Mammary epithelial cell (primary cell): ENCODE measurements at regions of chr6 and their contacts with region 1.

Region 1: DNA sequence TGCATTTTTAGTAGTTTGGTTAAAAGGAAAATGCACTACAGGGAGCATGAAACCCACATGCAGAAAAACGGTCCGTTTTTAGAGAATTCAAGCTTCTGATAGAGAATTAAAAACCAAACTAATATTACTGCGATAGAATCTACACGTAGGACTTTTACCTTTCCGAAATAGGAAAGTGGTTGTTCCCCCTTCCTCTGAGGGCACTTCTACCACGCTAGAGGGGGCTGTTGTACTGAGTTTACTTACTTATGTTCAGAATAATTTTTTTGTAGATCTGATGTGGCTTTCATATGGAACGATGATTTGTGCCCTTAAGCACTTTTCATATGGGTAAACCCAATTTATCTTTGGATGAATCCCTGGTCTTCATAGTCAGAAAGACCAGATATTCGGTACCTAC is 264.3 kb upstream of the PLN start:
- DNase-seq: peak; percentile 56
- H3K4me3 ChIP-seq: no peak overlapping the region
- H3K27ac ChIP-seq: no peak overlapping the region
- H3K4me1 ChIP-seq: no peaks in the 10 kb centered on the region
- H3K27me3 ChIP-seq: no peaks in the 10 kb centered on the region
- CTCF ChIP-seq: peak; percentile 77 to 80

Region 2: GRCh38 chr6:118111708-118112107 is 172.1 kb before region 1 on chr6:
- CTCF ChIA-PET with region 1: no interaction called
- dilution Hi-C with region 1: no loop called
- in situ Hi-C with region 1: no loop called
- intact Hi-C with region 1: no loop called
- DNase-seq: no peak
- H3K4me3 ChIP-seq: no peak overlapping the region
- H3K27ac ChIP-seq: no peak overlapping the region
- H3K4me1 ChIP-seq: no peaks in the 10 kb centered on the region
- H3K27me3 ChIP-seq: no peaks in the 10 kb centered on the region
- CTCF ChIP-seq: no peak

Region 3: DNA sequence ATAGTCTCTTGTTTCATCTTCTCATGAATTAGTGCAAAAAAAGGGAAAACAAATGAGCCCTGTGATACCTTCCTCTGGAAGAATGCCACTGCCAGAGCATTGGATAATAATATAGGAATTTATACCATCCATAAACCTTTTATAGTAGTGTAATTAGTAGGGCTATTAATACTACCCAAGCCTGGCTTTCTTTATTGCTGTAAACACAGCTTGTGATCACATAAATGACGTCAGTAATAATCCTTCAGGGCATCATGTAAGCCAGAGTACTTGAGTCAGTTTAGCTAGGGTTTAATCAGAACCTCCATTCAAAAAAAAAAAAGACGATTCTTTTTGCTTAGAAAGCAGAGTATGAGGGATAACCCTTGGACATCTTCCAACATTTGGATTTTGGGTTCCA is 111.9 kb before region 1 on chr6:
- CTCF ChIA-PET with region 1: no interaction called
- dilution Hi-C with region 1: no loop called
- in situ Hi-C with region 1: no loop called
- intact Hi-C with region 1: no loop called
- DNase-seq: peak; percentile 3
- H3K4me3 ChIP-seq: no peak overlapping the region
- H3K27ac ChIP-seq: no peak overlapping the region
- H3K4me1 ChIP-seq: no peaks in the 10 kb centered on the region
- H3K27me3 ChIP-seq: no peaks in the 10 kb centered on the region
- CTCF ChIP-seq: no peak

Region 4: GRCh38 chr6:118377711-118378414 is 94.1 kb after region 1 on chr6:
- CTCF ChIA-PET with region 1: no interaction called
- dilution Hi-C with region 1: no loop called
- in situ Hi-C with region 1: no loop called
- intact Hi-C with region 1: no loop called
- DNase-seq: no peak
- H3K4me3 ChIP-seq: no peak overlapping the region
- H3K27ac ChIP-seq: no peak overlapping the region
- H3K4me1 ChIP-seq: no peaks in the 10 kb centered on the region
- H3K27me3 ChIP-seq: no peaks in the 10 kb centered on the region
- CTCF ChIP-seq: no peak

Region 5: GRCh38 chr6:118509009-118509617 is 225.3 kb after region 1 on chr6:
- CTCF ChIA-PET with region 1: interaction called, 7 read pairs
- dilution Hi-C with region 1: no loop called
- in situ Hi-C with region 1: loop called (anchors 10 to 25 kb)
- intact Hi-C with region 1: loop called (anchors 1 kb)
- DNase-seq: no peak
- H3K4me3 ChIP-seq: no peak overlapping the region
- H3K27ac ChIP-seq: no peak overlapping the region
- H3K4me1 ChIP-seq: no peaks in the 10 kb centered on the region
- H3K27me3 ChIP-seq: no peaks in the 10 kb centered on the region
- CTCF ChIP-seq: peak; percentile 66 to 71

Region 6: DNA sequence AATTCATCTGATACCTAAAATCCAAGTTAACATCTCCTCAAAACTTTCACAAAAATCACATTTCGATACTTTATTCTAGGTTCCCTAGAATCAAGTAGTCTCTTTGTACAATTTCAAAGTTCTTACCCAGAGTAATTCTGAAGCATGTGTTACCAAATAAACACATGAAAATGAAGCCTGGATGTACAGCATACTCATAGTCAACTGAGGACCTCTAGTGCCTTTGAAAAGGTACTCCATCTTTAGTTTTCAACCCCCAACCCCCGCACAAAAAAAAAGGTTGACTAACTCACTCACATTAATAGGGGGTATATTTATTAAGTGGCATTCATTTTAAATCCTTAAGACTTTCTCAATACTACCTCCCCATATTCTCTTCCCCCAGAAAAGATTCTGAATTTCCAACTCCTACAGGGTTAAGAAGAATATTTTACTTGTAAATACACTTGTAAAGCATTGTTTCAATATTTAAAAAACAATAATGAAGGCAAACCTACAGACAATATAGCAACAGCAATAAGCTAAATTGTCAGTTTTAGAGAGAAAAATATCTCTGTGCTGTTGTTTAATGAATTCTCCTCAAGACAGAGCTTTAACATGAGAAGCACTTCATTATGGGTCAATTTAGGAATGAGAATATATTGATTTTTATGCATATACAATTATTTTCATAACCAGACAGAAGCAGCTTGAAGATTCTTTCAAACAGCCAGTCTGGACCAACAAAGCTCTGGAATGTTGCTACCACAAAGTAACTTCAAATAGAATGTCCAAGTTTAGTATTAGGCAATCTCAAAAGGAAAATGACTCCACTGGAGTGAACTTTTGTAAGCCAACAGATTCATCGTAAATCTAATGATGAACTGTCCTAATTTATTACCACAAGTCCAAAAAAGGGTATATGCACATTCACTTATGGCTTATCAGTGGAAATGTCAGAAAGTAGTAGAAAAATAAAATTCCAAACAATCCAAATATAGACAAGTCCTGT is 267.6 kb after region 1 on chr6:
- CTCF ChIA-PET with region 1: no interaction called
- dilution Hi-C with region 1: no loop called
- in situ Hi-C with region 1: no loop called
- intact Hi-C with region 1: loop called (anchors 1 kb)
- DNase-seq: peak; percentile 37
- H3K4me3 ChIP-seq: peak overlapping the region in 1 of 3 experiments; percentile 11
- H3K27ac ChIP-seq: no peak overlapping the region
- H3K4me1 ChIP-seq: peaks cover 5% of the 10 kb centered on the region
- H3K27me3 ChIP-seq: no peaks in the 10 kb centered on the region
- CTCF ChIP-seq: peak; percentile 58 to 71

Region 7: DNA sequence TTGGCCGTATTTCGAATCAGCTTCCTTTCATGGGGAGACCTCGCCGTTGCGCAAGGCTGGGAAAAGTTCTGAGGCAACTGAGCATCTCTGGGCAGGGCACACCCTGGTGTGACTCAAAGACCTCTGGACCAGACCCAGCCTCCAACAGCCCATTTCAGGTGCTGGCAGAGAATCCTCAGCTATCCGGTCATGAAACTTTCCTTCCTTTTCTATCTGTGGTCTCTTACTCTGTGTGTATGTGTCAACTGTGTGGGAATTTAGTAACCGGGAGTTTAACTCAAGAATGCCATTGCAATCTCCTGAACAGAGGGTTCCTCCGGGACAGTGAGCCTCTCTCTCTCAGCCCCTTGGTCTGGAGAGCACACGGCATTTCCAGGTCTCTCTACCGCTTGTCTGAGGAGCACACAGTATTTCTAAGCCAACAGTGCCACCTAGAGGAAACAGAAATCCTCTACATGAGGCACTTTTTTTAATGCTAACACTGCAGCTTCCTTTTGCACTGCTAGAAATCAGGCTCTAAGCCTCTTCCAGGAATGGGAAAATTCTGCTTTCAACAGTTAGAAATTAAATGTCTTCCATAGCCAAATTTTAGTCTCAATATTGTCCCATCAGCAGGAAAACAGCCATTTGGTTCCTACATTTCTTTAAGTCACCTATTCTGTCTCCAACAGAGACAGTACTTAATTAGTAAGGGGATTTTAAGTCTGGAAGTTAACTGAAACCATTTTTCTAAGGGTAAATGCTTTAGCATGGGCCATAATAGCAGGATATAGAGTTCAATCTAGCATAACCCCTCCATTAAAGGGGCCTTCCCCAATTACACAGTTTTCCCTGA is 297.0 kb after region 1 on chr6:
- CTCF ChIA-PET with region 1: no interaction called
- dilution Hi-C with region 1: no loop called
- in situ Hi-C with region 1: loop called in 1 of 2 experiments (anchors 10 kb)
- intact Hi-C with region 1: loop called (anchors 1 kb)
- DNase-seq: peak; percentile 66
- H3K4me3 ChIP-seq: no peak overlapping the region
- H3K27ac ChIP-seq: no peak overlapping the region
- H3K4me1 ChIP-seq: peaks cover 6% of the 10 kb centered on the region
- H3K27me3 ChIP-seq: no peaks in the 10 kb centered on the region
- CTCF ChIP-seq: peak; percentile 45 to 71

Region 8: GRCh38 chr6:118776607-118777549 is 493.1 kb after region 1 on chr6:
- CTCF ChIA-PET with region 1: no interaction called
- dilution Hi-C with region 1: no loop called
- in situ Hi-C with region 1: no loop called
- intact Hi-C with region 1: loop called (anchors 5 kb)
- DNase-seq: peak; percentile 88
- H3K4me3 ChIP-seq: peak overlapping the region in 2 of 3 experiments; percentile 10 to 23
- H3K27ac ChIP-seq: no peak overlapping the region
- H3K4me1 ChIP-seq: peaks cover 27% of the 10 kb centered on the region
- H3K27me3 ChIP-seq: no peaks in the 10 kb centered on the region
- CTCF ChIP-seq: peak; percentile 82 to 83

Region 9: GRCh38 chr6:118893807-118894424 is 610.1 kb after region 1 on chr6 and contains the start of gene ASF1A:
- CTCF ChIA-PET with region 1: no interaction called
- dilution Hi-C with region 1: no loop called
- in situ Hi-C with region 1: no loop called
- intact Hi-C with region 1: loop called (anchors 2 kb)
- DNase-seq: peak; percentile 98
- H3K4me3 ChIP-seq: peak within 1 kb of the TSS; percentile 82 to 99 (median 97)
- H3K27ac ChIP-seq: peak within 1 kb of the TSS; percentile 89
- H3K4me1 ChIP-seq: peaks cover 22% of the 10 kb centered on the region
- H3K27me3 ChIP-seq: no peaks in the 10 kb centered on the region
- CTCF ChIP-seq: peak; percentile 50 to 74
- total RNA-seq, gene ASF1A: 19.8 to 29.0 TPM

Region 10: GRCh38 chr6:119110601-119111548 is 827.1 kb after region 1 on chr6:
- CTCF ChIA-PET with region 1: no interaction called
- dilution Hi-C with region 1: no loop called
- in situ Hi-C with region 1: no loop called
- intact Hi-C with region 1: loop called (anchors 2 kb)
- DNase-seq: peak; percentile 41
- H3K4me3 ChIP-seq: no peak overlapping the region
- H3K27ac ChIP-seq: no peak overlapping the region
- H3K4me1 ChIP-seq: no peaks in the 10 kb centered on the region
- H3K27me3 ChIP-seq: no peaks in the 10 kb centered on the region
- CTCF ChIP-seq: peak; percentile 53 to 64